Left ventricle myocardium inferior (tissue), 1 donor: ENCODE measurements at regions of chr3 and their contacts with region 1.

Region 1: GRCh38 chr3:8441969-8442559 is 59.6 kb upstream of the LMCD1 start:
- DNase-seq: no peak
- H3K4me3 ChIP-seq: no peak overlapping the region
- H3K27ac ChIP-seq: no peak overlapping the region
- H3K4me1 ChIP-seq: peaks cover 52% of the 10 kb centered on the region
- H3K27me3 ChIP-seq: no peaks in the 10 kb centered on the region
- CTCF ChIP-seq: peak; percentile 86

Region 2: GRCh38 chr3:8607234-8608040 is 165.4 kb after region 1 on chr3:
- intact Hi-C with region 1: loop called (anchors 5 kb)
- DNase-seq: peak; percentile 69
- H3K4me3 ChIP-seq: no peak overlapping the region
- H3K27ac ChIP-seq: no peak overlapping the region
- H3K4me1 ChIP-seq: peaks cover 30% of the 10 kb centered on the region
- H3K27me3 ChIP-seq: no peaks in the 10 kb centered on the region
- CTCF ChIP-seq: peak; percentile 89

Region 3: GRCh38 chr3:8622873-8623691 is 181.0 kb after region 1 on chr3:
- intact Hi-C with region 1: loop called (anchors 5 kb)
- DNase-seq: peak; percentile 67
- H3K4me3 ChIP-seq: peak overlapping the region; percentile 17
- H3K27ac ChIP-seq: no peak overlapping the region
- H3K4me1 ChIP-seq: peaks cover 15% of the 10 kb centered on the region
- H3K27me3 ChIP-seq: no peaks in the 10 kb centered on the region
- CTCF ChIP-seq: peak; percentile 91